ENCODE measurements at regions of chr15 and their contacts with region 1.

Region 1: DNA sequence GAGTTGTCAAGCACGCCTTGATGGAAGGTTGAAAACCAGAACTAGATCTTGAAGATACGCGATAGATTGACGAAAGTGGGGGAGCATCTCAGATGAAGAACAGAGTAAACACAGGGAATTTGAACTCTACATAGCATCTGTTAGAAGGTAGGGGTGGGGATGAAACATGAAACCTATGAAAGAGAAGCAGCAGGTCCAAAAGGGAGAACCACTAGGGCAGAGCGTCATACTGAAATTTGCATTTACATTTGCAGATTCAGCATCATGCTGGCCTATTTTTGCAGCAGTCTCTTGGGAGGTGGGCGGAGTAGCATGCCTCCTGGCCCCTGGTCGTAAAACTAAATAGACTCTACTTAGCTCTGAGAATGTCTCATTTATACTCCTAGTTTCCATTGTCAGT is 46.1 kb upstream of the RASGRP1 start:
- DNase-seq: peak; percentile 79
- H3K4me3 Mint-ChIP-seq: peak overlapping the region; percentile 79
- H3K27ac Mint-ChIP-seq: peak overlapping the region; percentile 96
- H3K4me1 Mint-ChIP-seq: peaks cover 79% of the 10 kb centered on the region
- H3K27me3 Mint-ChIP-seq: no peaks in the 10 kb centered on the region

Region 2: DNA sequence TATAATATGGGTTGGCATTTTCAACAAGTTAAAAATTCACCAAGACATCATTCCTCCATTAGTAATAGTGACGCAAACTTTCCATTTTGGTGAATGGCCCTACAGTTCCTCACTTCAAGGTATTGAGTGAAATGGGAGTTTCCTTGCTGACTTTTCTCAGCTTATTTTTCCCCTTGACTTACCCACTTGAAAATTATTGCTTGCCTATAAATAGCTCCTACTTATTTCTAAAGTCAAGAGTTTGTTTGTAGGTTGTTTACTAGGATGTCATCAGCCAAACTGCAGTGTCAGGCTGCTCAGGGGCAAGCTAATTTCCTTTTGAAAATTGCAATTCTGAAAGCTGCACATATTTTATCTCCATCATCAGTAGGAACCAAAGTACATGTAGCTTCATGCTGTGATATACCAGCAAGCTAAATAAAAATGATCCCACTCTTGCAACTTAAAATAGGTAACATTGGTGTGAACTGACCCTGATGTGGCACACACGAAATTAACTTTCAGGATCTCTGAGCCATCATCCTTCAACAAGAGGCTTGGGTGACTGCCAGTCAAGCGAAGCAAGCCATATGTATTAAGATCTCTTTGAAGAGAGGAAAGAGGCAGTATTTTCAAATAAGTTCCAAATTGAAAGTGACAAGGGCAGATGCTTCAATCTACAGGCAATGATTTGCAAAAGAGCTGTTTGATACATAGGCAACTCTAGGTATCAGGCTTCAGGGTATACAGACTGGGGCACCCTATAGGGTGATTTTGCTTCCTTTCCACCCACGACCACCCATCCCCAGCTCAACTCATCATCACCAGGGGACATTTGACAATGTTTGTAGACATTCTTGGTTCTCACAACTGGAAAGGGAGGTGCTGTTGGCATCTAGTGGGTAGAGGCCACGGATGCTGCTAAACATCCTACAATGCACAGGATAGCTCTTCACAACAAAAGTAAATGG is 20.7 kb after region 1 on chr15:
- intact Hi-C with region 1: loop called (anchors 1 kb)
- DNase-seq: no peak
- H3K4me3 Mint-ChIP-seq: peak overlapping the region; percentile 53
- H3K27ac Mint-ChIP-seq: peak overlapping the region; percentile 77
- H3K4me1 Mint-ChIP-seq: peaks cover 47% of the 10 kb centered on the region
- H3K27me3 Mint-ChIP-seq: no peaks in the 10 kb centered on the region

Region 3: GRCh38 chr15:38671675-38672254 is 61.0 kb after region 1 on chr15:
- intact Hi-C with region 1: loop called (anchors 1 kb)
- DNase-seq: peak; percentile 88
- H3K4me3 Mint-ChIP-seq: peak overlapping the region; percentile 68
- H3K27ac Mint-ChIP-seq: peak overlapping the region; percentile 96
- H3K4me1 Mint-ChIP-seq: peaks cover 70% of the 10 kb centered on the region
- H3K27me3 Mint-ChIP-seq: no peaks in the 10 kb centered on the region

Region 4: DNA sequence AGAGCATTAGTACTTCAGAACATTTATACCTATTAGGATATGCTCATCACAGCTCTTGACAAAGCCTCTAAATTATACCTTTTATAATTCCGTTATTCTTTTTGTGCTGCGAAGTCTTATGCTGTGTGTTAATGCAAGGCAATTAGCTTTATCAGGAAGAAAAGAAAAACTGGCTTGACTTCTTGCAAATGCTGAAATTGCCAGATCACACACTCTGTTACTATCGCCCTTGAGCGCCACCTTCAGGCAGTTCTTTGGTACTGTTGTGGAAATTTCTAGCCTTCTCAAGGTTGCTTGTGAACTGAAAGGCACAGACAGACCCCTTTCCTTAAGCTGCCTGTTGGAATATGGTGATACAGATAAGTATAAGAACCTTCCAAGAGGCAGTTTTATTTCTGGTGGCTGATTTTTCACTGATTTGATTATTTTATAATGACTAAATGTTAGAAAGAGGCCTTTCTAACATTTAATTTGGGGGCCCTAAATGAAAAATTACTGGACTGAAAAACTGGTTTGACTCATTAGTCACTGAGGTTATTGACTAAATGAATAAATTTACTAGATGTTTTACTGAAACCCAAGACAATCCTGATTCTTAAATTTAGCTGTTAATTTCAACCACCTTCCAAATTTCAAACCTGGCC is 80.1 kb after region 1 on chr15:
- intact Hi-C with region 1: loop called (anchors 1 kb)
- DNase-seq: peak; percentile 94
- H3K4me3 Mint-ChIP-seq: no peak overlapping the region
- H3K27ac Mint-ChIP-seq: peak overlapping the region; percentile 54
- H3K4me1 Mint-ChIP-seq: peaks cover 75% of the 10 kb centered on the region
- H3K27me3 Mint-ChIP-seq: no peaks in the 10 kb centered on the region

Measured in activated CD4-positive, alpha-beta T cell treated with anti-CD3 and anti-CD28 coated beads, Interleukin-2, amount 10 ng/mL, durations not matched to agents 24 days and 14 days (primary cell).